Left colon (tissue), 2 donors: ENCODE measurements at regions of chr12 and their contacts with region 1.

Region 1: DNA sequence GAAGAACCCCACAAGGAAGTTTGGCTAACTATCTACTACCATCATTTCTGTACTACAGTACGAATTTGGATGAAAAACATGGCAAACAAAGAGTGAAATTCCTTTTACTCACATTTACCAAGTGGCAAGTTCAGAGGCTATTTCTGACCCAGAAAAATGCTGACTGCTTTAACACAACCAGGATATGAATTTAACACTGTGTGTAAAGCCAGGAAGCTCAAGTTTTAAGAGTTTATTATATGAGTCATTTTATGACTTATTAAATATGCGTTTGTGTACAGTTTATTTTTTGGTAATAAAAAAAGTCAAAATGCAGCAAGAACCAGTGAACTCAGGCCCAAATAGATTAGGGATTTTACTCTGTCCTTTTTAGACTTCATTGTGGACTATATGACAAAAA is 58.4 kb upstream of the STAC3 start:
- DNase-seq: no peak
- ATAC-seq: peak; percentile 93

Region 2: DNA sequence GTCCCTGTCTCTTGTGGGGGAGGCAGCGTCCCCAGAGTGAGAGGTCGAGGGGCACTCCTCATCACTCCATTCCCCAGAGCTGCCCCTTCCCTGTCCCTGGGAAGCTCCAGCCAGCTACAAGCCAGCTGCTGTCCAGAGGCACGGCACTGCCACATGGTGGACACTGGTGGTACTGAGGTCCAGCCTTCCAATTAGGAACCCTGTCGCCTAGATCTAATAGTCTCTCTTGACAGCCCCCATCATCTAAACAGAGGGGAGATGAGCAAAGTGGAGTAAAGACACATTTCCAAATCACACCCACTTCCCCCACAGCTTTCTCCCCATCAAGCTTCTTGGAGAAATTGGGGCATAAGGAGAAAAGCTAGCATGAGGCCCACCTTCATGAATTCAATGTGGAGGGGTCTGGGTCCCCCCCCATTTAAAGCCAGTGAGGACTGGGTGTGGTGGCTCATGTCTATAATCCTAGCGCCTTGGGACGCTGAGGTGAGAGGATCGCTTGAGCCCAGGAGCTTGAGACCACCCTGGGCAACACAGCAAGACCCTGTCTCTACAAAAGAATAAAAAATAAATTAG is 143.6 kb after region 1 on chr12:
- intact Hi-C with region 1: loop called in 1 of 2 experiments (anchors 5 kb)
- DNase-seq: peak; percentile 62 to 83
- ATAC-seq: peak; percentile 73